ENCODE measurements at regions of chr17 and their contacts with region 1.

Region 1: DNA sequence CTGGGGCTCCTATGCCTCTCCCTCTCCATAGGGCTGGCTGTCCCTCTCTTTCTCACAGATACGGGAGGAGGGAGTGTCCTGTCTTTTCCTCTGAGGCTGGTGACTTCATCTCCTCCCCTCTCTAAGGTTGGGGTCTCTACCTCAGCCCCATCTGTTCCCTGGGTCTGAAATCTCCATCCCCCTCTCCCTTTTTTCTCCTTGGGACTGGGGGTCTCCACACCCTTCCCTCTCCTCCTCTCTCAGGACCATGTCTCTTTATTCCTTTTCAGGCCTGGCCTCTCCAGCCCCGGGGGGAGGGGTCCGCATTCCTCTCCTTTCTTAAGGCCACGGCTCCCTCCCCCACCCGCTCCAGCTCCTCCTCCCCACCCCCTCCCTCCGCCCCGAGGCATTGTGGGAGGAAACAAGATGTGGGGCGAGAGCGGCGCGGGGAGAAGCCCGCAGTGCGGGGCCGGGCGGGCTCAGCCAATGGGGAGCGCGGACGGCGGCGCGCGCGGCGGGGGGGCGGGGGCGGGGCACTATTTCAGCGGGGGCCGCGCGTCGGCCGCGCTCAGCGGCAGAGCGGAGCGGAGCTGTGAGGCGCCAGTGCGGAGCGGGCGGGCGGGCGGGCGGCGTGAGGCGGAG is at the start of gene DYNLL2:
- DNase-seq: peak; percentile 93 to 97 (median 96)
- ATAC-seq: peak; percentile 91 to 93 (median 92)
- H3K4me3 ChIP-seq: peak within 1 kb of the TSS; percentile 68 to 100 (median 98)
- H3K27ac ChIP-seq: peak within 1 kb of the TSS; percentile 53 to 99 (median 97)
- H3K4me1 ChIP-seq: peaks cover 5 to 44% (median 38%) of the 10 kb centered on the region in 12 donors
- H3K27me3 ChIP-seq: peaks cover 0 to 3% (median 0%) of the 10 kb centered on the region in 9 donors
- CTCF ChIP-seq: no peak
- POLR2A ChIP-seq: no peak
- total RNA-seq, gene DYNLL2: 41.4 to 102 (median 74.0) TPM

Region 2: DNA sequence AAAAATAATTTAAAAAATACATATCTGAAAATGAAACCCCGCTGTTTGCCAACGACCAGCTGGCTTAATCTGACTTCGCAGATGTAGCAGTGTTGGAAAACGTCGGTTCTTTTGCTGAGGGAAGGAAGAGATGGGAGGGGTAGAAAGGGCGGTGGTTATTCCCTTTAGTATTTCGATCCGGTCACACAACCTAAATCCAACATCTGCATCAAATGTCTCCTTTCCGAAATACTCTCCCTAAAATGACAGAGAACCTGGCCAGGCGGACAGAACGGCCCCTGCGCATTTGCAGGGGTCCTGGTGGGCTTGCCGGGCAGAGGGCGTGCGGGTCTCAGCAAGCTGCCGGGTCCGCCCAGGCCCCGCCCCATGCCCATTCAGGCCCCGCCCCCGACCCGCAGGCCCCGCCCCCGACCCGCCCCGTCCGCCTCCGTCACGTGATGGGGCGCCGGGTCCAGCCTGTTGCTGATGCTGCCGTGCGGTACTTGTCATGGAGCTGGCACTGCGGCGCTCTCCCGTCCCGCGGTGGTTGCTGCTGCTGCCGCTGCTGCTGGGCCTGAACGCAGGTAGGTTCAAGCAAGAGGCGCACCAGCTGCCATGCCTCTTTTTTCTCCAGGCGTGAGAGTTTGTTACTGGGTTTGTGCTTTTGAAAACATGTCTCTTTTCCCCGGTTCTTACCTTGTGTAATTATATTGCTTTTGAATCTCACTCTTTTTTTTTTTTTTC is 1105.1 kb before region 1 on chr17 and contains the start of gene SCPEP1:
- intact Hi-C with region 1: loop called in 1 of 10 experiments (anchors 10 kb)
- DNase-seq: peak; percentile 86 to 93 (median 90)
- ATAC-seq: peak; percentile 90 to 97 (median 96)
- H3K4me3 ChIP-seq: peak within 1 kb of the TSS; percentile 25 to 80 (median 62)
- H3K27ac ChIP-seq: peak within 1 kb of the TSS; percentile 1 to 80 (median 66)
- H3K4me1 ChIP-seq: peaks cover 0 to 42% (median 11%) of the 10 kb centered on the region in 12 donors
- H3K27me3 ChIP-seq: no peaks in the 10 kb centered on the region
- CTCF ChIP-seq: peak in 1 of 12 donors; percentile 8
- POLR2A ChIP-seq: peak in 1 of 2 donors; percentile 66
- total RNA-seq, gene SCPEP1: 39.8 to 162 (median 58.0) TPM

Region 3: GRCh38 chr17:57849874-57850754 is 232.9 kb before region 1 on chr17 and contains the start of gene MRPS23:
- intact Hi-C with region 1: loop called in 7 of 10 experiments (anchors 5 to 10 kb)
- DNase-seq: peak; percentile 98 to 99 (median 99)
- ATAC-seq: peak; percentile 74 to 91 (median 88)
- H3K4me3 ChIP-seq: peak within 1 kb of the TSS; percentile 57 to 98 (median 82)
- H3K27ac ChIP-seq: peak within 1 kb of the TSS; percentile 88 to 97 (median 94)
- H3K4me1 ChIP-seq: peaks cover 4 to 68% (median 35%) of the 10 kb centered on the region in 12 donors
- H3K27me3 ChIP-seq: no peaks in the 10 kb centered on the region
- CTCF ChIP-seq: no peak
- POLR2A ChIP-seq: peak; percentile 40 to 83
- total RNA-seq, gene MRPS23: 44.6 to 99.3 (median 71.8) TPM

Region 4: DNA sequence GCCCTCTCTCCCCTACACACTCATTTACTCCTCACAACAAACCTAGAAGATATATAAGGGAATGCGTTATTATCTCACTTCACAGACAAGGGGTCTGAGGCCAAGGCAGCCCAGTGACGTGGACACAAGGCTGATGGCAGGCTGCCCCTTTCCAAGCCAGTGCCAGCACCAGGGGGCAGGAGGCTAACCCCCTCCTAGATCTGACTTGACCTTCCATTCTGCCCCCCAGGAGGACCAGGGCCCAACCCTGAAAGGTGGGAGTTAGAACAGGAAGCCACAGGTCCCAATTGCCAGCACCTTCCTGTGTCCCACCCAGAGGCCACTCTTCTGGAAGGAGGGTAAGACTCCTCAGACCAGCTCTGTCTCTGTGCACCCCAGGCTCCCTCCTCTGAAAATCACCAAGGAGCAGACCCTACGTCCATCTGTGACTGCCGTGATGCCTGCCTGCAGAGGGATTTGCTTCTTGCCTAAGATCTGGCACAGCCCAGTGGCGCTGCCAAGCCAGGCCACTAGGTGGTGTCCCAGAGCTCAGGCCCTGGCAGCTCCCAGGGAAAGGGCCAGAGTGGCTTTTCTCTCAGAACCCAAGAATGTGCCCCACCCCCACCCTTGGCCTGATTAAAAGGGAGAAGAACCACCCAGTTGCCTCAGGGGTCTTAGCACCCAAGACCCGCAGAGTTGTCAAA is 190.7 kb before region 1 on chr17:
- intact Hi-C with region 1: no loop called
- DNase-seq: peak; percentile 87 to 93 (median 91)
- ATAC-seq: peak; percentile 46 to 65 (median 47)
- H3K4me3 ChIP-seq: peak overlapping the region in 6 of 12 donors; percentile 48 to 56 (median 51)
- H3K27ac ChIP-seq: peak overlapping the region; percentile 92 to 100 (median 97)
- H3K4me1 ChIP-seq: peaks cover 6 to 90% (median 77%) of the 10 kb centered on the region in 12 donors
- H3K27me3 ChIP-seq: no peaks in the 10 kb centered on the region
- CTCF ChIP-seq: peak; percentile 95 to 100 (median 98)
- POLR2A ChIP-seq: no peak

Region 5: GRCh38 chr17:58006924-58007780 is 75.8 kb before region 1 on chr17 and contains the start of gene SRSF1:
- intact Hi-C with region 1: loop called in 9 of 10 experiments (anchors 1 to 5 kb)
- DNase-seq: peak; percentile 98 to 99 (median 98)
- ATAC-seq: peak; percentile 95 to 98 (median 96)
- H3K4me3 ChIP-seq: peak within 1 kb of the TSS; percentile 68 to 96 (median 78)
- H3K27ac ChIP-seq: peak within 1 kb of the TSS; percentile 92 to 99 (median 96)
- H3K4me1 ChIP-seq: peaks cover 16 to 49% (median 38%) of the 10 kb centered on the region in 12 donors
- H3K27me3 ChIP-seq: no peaks in the 10 kb centered on the region
- CTCF ChIP-seq: no peak
- POLR2A ChIP-seq: peak; percentile 74 to 92
- total RNA-seq, gene SRSF1: 80.8 to 114 (median 99.7) TPM